ENCODE measurements at regions of chr2 and their contacts with region 1.

Region 1: DNA sequence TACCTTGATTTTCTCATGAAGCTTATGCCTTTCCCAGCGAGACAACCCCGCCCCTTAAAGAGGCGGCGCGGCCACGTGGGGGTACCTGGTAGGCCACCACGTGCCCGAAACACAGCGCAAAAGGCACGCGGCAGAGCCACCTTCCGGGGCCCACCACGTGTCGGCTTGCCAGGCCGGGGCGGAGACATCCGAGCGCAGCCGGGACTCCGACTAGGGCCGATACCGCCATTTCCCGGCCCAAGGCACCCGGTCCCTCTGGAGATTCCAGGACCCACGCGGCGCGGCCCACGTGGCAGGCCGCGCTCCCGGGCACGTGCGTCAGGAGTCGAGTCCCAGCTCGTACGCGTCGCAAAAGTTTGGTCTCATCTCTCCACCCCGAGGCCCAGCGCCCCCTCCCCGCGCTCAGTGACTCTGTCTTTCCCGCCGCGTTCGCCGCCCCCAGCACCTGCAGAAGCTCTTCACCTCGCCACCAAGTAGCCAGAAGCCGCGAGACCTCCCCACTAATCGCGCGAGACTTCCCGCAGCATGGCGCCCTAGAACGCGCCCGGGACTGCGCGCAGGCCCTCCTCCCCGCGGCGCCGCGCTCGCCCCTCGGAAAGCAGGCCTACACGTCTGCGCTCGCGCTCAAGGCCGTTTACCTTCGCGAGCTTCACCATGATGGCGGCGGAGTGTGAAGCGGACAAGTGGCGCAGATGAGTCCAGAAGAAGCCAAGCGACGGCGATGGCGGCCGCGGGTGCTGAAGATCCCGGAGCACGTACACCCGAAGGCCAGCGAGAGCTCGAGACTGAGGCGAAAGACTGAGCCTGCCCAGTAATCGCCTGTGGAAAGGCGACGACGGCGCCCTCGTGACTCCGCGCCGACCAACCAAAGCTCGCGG is at the start of gene NCL:
- H3K4me3 ChIP-seq: peak within 1 kb of the TSS; percentile 83
- H3K27ac ChIP-seq: peak within 1 kb of the TSS; percentile 99
- H3K4me1 ChIP-seq: no peaks in the 10 kb centered on the region
- CTCF ChIP-seq: peak; percentile 59

Region 2: GRCh38 chr2:231452799-231453508 is 11.0 kb before region 1 on chr2:
- CTCF ChIA-PET with region 1: interaction called, 9 read pairs
- POLR2A ChIA-PET with region 1: interaction called, 119 read pairs
- H3K4me3 ChIP-seq: no peak overlapping the region
- H3K27ac ChIP-seq: 0 out of 2 replicates have a peak overlapping the region, but pooled peaks have one; percentile 7
- H3K4me1 ChIP-seq: no peaks in the 10 kb centered on the region
- CTCF ChIP-seq: no peak

Region 3: DNA sequence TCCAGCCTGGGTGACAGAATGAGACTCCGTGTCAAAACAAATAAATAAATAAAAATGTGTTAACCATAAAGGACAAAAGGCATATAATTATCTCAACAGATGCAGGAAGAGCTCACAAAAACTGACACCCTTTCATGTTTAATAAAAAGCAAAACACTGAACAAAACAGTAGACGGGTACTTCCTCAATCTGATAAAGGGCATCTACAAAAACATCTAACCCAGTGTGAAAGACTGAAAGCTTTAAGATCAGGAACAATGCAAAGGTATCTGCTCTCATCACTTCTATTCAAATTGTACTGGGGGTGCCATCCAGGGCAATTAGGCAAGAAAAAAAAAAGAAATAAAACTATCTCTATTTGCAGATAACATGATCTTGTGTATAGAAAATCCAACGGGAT is 12.0 kb after region 1 on chr2:
- CTCF ChIA-PET with region 1: interaction called, 55 read pairs
- POLR2A ChIA-PET with region 1: interaction called, 43 read pairs
- H3K4me3 ChIP-seq: no peak overlapping the region
- H3K27ac ChIP-seq: no peak overlapping the region
- H3K4me1 ChIP-seq: no peaks in the 10 kb centered on the region
- CTCF ChIP-seq: no peak

Region 4: DNA sequence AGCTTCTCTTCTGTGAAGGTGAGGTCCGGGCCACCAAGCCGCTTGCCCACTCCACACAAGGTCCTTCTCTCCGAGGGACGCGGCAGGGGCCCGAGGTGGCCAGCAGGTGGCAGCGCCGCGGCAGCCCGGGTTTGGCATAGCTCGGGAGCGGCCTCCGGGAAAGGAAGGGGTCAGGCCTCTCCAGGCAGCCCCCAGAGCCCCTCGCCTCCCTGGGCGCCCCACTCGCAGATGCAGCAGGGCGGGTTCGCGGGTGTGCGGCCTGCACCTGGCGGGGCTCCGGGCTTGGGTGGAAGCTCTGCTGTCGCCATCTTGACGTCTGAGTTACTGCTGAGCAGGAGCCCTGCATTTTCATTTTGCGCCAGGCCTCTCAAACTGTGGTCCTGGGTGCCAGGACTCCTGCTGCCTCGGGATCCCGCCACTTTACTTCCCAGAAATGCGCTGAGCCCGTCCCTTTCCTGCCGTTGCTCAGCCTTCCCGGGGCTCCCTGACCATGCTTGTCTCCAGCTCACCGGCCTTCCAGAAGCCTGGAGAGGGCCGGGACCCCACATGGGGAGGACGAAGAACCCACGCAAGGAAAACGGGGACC is 19.0 kb after region 1 on chr2:
- CTCF ChIA-PET with region 1: interaction called, 55 read pairs
- POLR2A ChIA-PET with region 1: interaction called, 43 read pairs
- H3K4me3 ChIP-seq: no peak overlapping the region
- H3K27ac ChIP-seq: no peak overlapping the region
- H3K4me1 ChIP-seq: no peaks in the 10 kb centered on the region
- CTCF ChIP-seq: peak; percentile 84

Region 5: DNA sequence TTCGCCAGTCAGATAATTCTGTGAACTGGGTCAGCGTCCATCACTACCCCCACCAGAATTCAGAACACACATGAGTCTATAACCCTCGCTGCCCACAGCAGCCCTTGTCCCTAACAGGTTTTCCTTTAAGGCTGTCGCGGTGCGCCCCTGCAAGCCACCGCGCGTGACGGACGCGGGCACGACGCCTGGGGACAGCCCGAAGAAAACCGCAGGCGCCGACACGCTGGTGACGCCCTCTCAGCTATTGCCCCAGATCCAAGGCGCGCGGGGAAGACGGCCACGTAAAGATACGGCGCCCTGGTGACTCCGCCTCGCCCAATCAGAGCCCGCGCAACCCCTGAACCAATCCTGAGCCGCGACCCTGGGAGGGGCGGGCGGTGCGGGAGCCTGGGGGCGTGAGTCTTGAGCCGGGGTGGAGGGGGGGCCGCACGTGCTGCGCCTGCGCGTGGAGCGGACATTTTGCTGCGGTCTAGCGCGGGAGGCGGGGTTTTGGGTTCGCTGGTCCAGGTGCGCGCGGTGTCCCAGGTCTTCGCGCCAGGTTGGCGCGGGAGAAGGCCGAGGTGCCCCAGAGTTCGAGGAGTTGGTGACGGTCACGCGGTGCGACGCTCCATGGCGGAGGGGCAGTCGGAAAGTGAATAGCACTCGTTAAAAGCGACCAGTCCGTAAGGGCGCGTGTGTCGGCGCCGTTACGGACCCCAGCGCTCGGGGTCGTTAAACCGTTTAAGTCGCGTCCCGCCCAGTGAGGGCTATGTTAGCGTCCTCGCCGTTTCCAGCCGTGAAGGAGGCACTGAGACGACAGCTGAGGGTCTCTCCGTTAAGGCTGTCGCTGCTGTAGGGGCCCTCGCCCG is 50.4 kb after region 1 on chr2:
- CTCF ChIA-PET with region 1: interaction called, 5 read pairs
- POLR2A ChIA-PET with region 1: interaction called, 27 read pairs
- H3K4me3 ChIP-seq: peak overlapping the region; percentile 51
- H3K27ac ChIP-seq: peak overlapping the region; percentile 47; the same call in 1 of the 2 replicates
- H3K4me1 ChIP-seq: no peaks in the 10 kb centered on the region; the same call in 1 of the 2 replicates
- CTCF ChIP-seq: no peak